ENCODE measurements at regions of chr1 and their contacts with region 1.

Region 1: DNA sequence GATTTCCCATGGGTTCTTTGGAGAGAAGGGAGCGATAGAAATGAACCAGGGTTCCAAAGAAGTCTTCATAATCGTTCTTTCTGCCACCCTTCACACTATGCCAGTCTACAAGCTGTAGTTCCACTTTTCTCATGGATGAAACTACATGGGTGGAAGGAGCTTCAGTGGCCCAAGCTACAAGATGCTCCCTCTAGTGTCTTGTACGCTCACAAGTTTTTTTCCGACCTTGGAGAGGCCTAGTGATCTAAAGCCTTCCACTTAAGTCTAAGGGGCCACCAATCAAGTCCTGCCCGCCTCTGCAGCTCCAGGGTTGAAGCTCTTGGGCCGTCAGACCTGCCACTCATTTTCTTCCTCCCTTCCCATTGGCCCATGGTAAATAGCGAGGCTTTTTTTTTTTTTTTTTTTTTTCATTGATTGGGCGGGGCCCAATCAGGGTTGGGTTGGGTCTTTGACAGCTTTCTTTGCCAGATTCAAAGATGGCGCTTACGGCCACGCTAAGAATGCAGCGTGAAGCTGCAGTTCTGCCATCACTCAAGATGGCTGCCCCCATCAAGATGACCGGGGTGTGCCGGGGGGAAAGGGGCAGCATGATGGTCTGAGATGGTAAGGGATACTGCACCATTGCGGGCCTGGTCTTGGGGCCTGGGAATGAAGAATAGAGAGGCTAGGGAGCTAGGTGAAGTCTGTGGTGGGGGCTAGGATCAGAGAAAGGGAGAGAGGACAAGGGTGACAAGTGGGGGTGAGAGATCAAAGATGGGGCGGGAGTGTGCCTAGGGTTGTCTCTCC is at the start of gene TOMM40L:
- DNase-seq: peak; percentile 99
- H3K4me3 ChIP-seq: peak within 1 kb of the TSS; percentile 43 to 83 (median 59)
- H3K27ac ChIP-seq: peak within 1 kb of the TSS; percentile 31
- H3K4me1 ChIP-seq: peaks cover 18% of the 10 kb centered on the region
- H3K27me3 ChIP-seq: no peaks in the 10 kb centered on the region
- CTCF ChIP-seq: peak; percentile 55 to 57
- POLR2A ChIP-seq: peak; percentile 36
- total RNA-seq, gene TOMM40L: 18.7 TPM in 2 replicates

Region 2: GRCh38 chr1:160884579-160884978 is 341.1 kb before region 1 on chr1:
- CTCF ChIA-PET with region 1: no interaction called
- POLR2A ChIA-PET with region 1: no interaction called
- dilution Hi-C with region 1: no loop called
- intact Hi-C with region 1: no loop called
- DNase-seq: no peak
- H3K4me3 ChIP-seq: no peak overlapping the region
- H3K27ac ChIP-seq: no peak overlapping the region
- H3K4me1 ChIP-seq: peaks cover 4% of the 10 kb centered on the region
- H3K27me3 ChIP-seq: no peaks in the 10 kb centered on the region
- CTCF ChIP-seq: no peak
- POLR2A ChIP-seq: no peak

Region 3: GRCh38 chr1:161001525-161001924 is 224.2 kb before region 1 on chr1:
- CTCF ChIA-PET with region 1: no interaction called
- POLR2A ChIA-PET with region 1: no interaction called
- dilution Hi-C with region 1: no loop called
- intact Hi-C with region 1: no loop called
- DNase-seq: no peak
- H3K4me3 ChIP-seq: no peak overlapping the region
- H3K27ac ChIP-seq: no peak overlapping the region
- H3K4me1 ChIP-seq: peaks cover 13% of the 10 kb centered on the region
- H3K27me3 ChIP-seq: no peaks in the 10 kb centered on the region
- CTCF ChIP-seq: no peak
- POLR2A ChIP-seq: no peak

Region 4: GRCh38 chr1:161165742-161166668 is 59.7 kb before region 1 on chr1 and contains the start of gene PPOX:
- CTCF ChIA-PET with region 1: interaction called, 22 read pairs
- POLR2A ChIA-PET with region 1: interaction called, 8 read pairs
- dilution Hi-C with region 1: no loop called
- intact Hi-C with region 1: no loop called
- DNase-seq: peak; percentile 99
- H3K4me3 ChIP-seq: peak within 1 kb of the TSS; percentile 81 to 87 (median 87)
- H3K27ac ChIP-seq: peak within 1 kb of the TSS; percentile 74
- H3K4me1 ChIP-seq: peaks cover 16% of the 10 kb centered on the region
- H3K27me3 ChIP-seq: no peaks in the 10 kb centered on the region
- CTCF ChIP-seq: peak; percentile 42 to 60
- POLR2A ChIP-seq: peak; percentile 21
- total RNA-seq, gene PPOX: 28.5 and 28.9 TPM in 2 replicates

Region 5: GRCh38 chr1:161192476-161193465 is 33.0 kb before region 1 on chr1:
- CTCF ChIA-PET with region 1: interaction called, 44 read pairs
- POLR2A ChIA-PET with region 1: interaction called, 5 read pairs
- dilution Hi-C with region 1: no loop called
- intact Hi-C with region 1: loop called (anchors 1 kb)
- DNase-seq: peak; percentile 68
- H3K4me3 ChIP-seq: no peak overlapping the region
- H3K27ac ChIP-seq: no peak overlapping the region
- H3K4me1 ChIP-seq: peaks cover 21% of the 10 kb centered on the region
- H3K27me3 ChIP-seq: no peaks in the 10 kb centered on the region
- CTCF ChIP-seq: peak; percentile 93
- POLR2A ChIP-seq: no peak

Region 6: DNA sequence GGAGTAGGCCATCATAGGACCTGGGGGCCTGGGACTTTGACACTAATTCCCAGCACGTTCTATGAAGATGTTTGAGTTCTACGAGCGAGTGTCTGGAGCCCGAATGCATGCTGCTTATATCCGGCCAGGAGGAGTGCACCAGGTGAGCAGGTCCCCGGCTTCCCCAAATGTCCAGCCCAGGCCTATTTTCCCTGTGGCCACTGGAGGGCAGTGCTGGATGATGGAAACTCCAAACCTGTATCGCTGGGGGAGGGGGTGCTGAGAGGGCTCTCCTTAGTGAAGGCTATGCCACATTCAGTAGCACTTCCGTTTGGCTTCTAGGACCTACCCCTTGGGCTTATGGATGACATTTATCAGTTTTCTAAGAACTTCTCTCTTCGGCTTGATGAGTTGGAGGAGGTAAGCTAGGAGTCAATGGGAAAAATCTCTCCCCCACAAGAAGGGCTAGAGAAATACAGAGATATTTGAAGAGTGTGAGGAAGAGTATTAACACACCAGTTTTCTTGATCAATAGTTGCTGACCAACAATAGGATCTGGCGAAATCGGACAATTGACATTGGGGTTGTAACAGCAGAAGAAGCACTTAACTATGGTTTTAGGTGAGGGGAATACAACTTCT is 15.8 kb before region 1 on chr1:
- CTCF ChIA-PET with region 1: interaction called, 55 read pairs
- POLR2A ChIA-PET with region 1: interaction called, 4 read pairs
- dilution Hi-C with region 1: no loop called
- intact Hi-C with region 1: loop called (anchors 1 kb)
- DNase-seq: peak; percentile 62
- H3K4me3 ChIP-seq: no peak overlapping the region
- H3K27ac ChIP-seq: no peak overlapping the region
- H3K4me1 ChIP-seq: peaks cover 10% of the 10 kb centered on the region
- H3K27me3 ChIP-seq: no peaks in the 10 kb centered on the region
- CTCF ChIP-seq: peak; percentile 89 to 91
- POLR2A ChIP-seq: no peak

Region 7: GRCh38 chr1:161274874-161275273 is 49.1 kb after region 1 on chr1:
- CTCF ChIA-PET with region 1: no interaction called
- POLR2A ChIA-PET with region 1: no interaction called
- dilution Hi-C with region 1: no loop called
- intact Hi-C with region 1: no loop called
- DNase-seq: no peak
- H3K4me3 ChIP-seq: no peak overlapping the region
- H3K27ac ChIP-seq: no peak overlapping the region
- H3K4me1 ChIP-seq: no peaks in the 10 kb centered on the region
- H3K27me3 ChIP-seq: peaks cover 13 to 23% of the 10 kb centered on the region in 2 experiments
- CTCF ChIP-seq: no peak
- POLR2A ChIP-seq: no peak

Region 8: GRCh38 chr1:161292631-161293030 is 66.9 kb after region 1 on chr1:
- CTCF ChIA-PET with region 1: interaction called, 95 read pairs
- POLR2A ChIA-PET with region 1: no interaction called
- dilution Hi-C with region 1: no loop called
- intact Hi-C with region 1: loop called (anchors 1 kb)
- DNase-seq: no peak
- H3K4me3 ChIP-seq: no peak overlapping the region
- H3K27ac ChIP-seq: no peak overlapping the region
- H3K4me1 ChIP-seq: no peaks in the 10 kb centered on the region
- H3K27me3 ChIP-seq: peaks cover 5 to 8% of the 10 kb centered on the region in 2 experiments
- CTCF ChIP-seq: no peak
- POLR2A ChIP-seq: no peak

Region 9: GRCh38 chr1:161330346-161330745 is 104.6 kb after region 1 on chr1:
- CTCF ChIA-PET with region 1: no interaction called
- POLR2A ChIA-PET with region 1: no interaction called
- dilution Hi-C with region 1: no loop called
- intact Hi-C with region 1: no loop called
- DNase-seq: no peak
- H3K4me3 ChIP-seq: no peak overlapping the region
- H3K27ac ChIP-seq: no peak overlapping the region
- H3K4me1 ChIP-seq: no peaks in the 10 kb centered on the region
- H3K27me3 ChIP-seq: no peaks in the 10 kb centered on the region
- CTCF ChIP-seq: no peak
- POLR2A ChIP-seq: no peak

Region 10: GRCh38 chr1:161367684-161368400 is 142.1 kb after region 1 on chr1 and contains the start of gene CFAP126:
- CTCF ChIA-PET with region 1: interaction called, 78 read pairs
- POLR2A ChIA-PET with region 1: no interaction called
- dilution Hi-C with region 1: no loop called
- intact Hi-C with region 1: no loop called
- DNase-seq: peak; percentile 81
- H3K4me3 ChIP-seq: no peak within 1 kb of the TSS
- H3K27ac ChIP-seq: peak within 1 kb of the TSS; percentile 16
- H3K4me1 ChIP-seq: peaks cover 2% of the 10 kb centered on the region
- H3K27me3 ChIP-seq: no peaks in the 10 kb centered on the region
- CTCF ChIP-seq: peak; percentile 6 to 9
- POLR2A ChIP-seq: no peak
- total RNA-seq, gene CFAP126: not detected in 2 replicates

Region 11: GRCh38 chr1:161389691-161390558 is 164.2 kb after region 1 on chr1:
- CTCF ChIA-PET with region 1: interaction called, 156 read pairs
- POLR2A ChIA-PET with region 1: interaction called, 8 read pairs
- dilution Hi-C with region 1: no loop called
- intact Hi-C with region 1: no loop called
- DNase-seq: peak; percentile 96
- H3K4me3 ChIP-seq: peak overlapping the region; percentile 15 to 72 (median 64)
- H3K27ac ChIP-seq: peak overlapping the region; percentile 64
- H3K4me1 ChIP-seq: peaks cover 3% of the 10 kb centered on the region
- H3K27me3 ChIP-seq: no peaks in the 10 kb centered on the region
- CTCF ChIP-seq: no peak
- POLR2A ChIP-seq: peak; percentile 95